ENCODE measurements at regions of chrX and their contacts with region 1.

Region 1: GRCh38 chrX:68550193-68550592 is 51.3 kb downstream of the YIPF6 start:
- DNase-seq: no peak
- H3K4me3 ChIP-seq: no peak overlapping the region
- CTCF ChIP-seq: no peak
- POLR2A ChIP-seq: no peak

Region 2: GRCh38 chrX:68574240-68574639 is 24.0 kb after region 1 on chrX:
- intact Hi-C with region 1: loop called (anchors 2 kb)
- DNase-seq: no peak
- H3K4me3 ChIP-seq: no peak overlapping the region
- CTCF ChIP-seq: no peak
- POLR2A ChIP-seq: no peak